ENCODE measurements at regions of chr1 and their contacts with region 1.

Region 1: DNA sequence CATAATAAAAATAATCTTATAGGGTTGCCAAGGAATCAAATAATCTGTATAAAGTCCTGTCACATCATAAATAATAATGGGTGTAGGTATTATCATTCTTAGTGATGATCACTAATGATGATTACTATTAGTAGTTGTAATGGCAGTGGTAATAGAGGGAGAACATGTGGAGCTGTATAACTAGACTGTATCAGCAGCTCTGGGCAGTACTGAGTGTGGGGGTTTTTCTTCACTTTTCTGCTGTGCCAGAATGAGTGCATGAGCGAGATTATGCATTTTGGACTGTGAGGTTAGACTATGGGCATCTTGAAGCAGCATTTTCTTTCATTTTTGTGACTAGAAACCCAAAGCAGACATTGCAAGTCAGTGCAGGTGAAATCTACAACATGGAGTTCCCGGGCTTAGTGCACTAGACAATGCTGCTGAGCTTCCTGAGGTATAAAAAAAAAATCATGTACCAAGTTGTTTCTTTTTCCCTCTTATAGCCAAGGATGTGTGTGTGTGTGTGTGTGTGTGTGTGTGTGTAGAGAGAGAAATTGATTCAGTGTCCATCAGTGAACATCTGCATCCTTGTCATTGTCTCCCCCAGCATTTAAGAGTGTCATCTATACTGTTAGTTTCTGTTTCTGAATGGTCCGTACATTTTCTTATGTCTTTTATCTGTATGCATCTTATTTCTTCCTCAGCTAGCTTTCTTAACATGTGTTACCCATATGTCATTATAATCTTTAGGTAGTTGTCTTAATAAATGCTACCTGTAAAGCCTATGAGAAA is 86.6 kb downstream of the GIPC2 start:
- DNase-seq: no peak
- H3K4me3 Mint-ChIP-seq: no peak overlapping the region
- H3K27ac Mint-ChIP-seq: no peak overlapping the region
- H3K4me1 Mint-ChIP-seq: no peaks in the 10 kb centered on the region
- H3K27me3 Mint-ChIP-seq: no peaks in the 10 kb centered on the region
- CTCF ChIP-seq: no peak

Region 2: GRCh38 chr1:77975386-77975785 is 157.0 kb before region 1 on chr1:
- CTCF ChIA-PET with region 1: no interaction called
- POLR2A ChIA-PET with region 1: no interaction called
- intact Hi-C with region 1: no loop called
- DNase-seq: peak; percentile 36
- H3K4me3 Mint-ChIP-seq: no peak overlapping the region
- H3K27ac Mint-ChIP-seq: no peak overlapping the region
- H3K4me1 Mint-ChIP-seq: peaks cover 23% of the 10 kb centered on the region
- H3K27me3 Mint-ChIP-seq: no peaks in the 10 kb centered on the region
- CTCF ChIP-seq: no peak

Region 3: DNA sequence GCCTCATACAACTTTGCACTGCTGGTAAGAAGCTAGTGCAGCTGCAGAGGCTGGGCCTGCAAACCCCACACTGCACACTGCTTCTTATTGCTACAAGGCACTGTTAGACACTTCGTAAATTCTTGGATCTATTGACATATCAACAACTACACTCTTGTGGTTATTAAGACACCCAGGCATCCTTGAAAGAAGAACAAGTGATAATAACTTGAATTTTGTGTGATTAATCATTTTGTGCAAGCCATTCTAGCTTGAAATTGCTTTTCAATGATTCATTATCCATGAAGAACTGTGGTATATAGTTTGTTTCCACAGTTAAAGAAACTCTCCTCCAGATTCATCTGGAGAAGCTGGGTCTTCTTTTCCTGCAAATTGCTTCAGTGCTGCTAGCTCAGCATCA is 454.2 kb after region 1 on chr1:
- CTCF ChIA-PET with region 1: interaction called, 10 read pairs
- POLR2A ChIA-PET with region 1: no interaction called
- intact Hi-C with region 1: no loop called
- DNase-seq: no peak
- H3K4me3 Mint-ChIP-seq: no peak overlapping the region
- H3K27ac Mint-ChIP-seq: no peak overlapping the region
- H3K4me1 Mint-ChIP-seq: peaks cover 14% of the 10 kb centered on the region
- H3K27me3 Mint-ChIP-seq: no peaks in the 10 kb centered on the region
- CTCF ChIP-seq: no peak

Region 4: DNA sequence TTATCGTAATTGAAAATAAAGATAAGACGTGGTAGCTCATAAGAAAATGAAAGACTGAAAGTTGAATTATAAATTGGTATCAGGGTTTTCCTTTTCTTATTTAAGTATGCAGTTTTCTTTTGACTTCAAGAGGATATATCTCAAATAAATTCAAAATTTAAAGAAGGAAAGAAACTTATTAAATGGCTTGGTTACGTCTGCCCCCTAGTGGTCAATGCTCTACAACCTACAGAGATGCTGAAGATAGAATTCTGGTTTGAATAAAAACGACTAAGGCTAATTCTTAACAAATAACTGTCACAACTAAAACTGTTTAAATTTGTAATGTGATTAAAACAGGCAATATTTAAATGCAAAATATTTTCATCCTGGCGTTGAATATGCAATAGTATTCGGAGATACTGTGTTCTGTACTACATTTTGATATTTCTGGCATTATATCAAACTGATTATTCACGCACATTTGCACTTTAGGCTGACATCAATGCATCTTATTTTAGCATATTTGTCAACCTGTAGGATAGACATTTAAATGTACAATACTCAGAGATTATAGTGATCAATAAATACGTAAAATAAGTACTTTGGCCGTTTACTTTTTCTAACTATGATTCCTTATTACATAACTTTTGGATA is 544.1 kb after region 1 on chr1:
- CTCF ChIA-PET with region 1: interaction called, 21 read pairs
- POLR2A ChIA-PET with region 1: no interaction called
- intact Hi-C with region 1: loop called (anchors 1 kb)
- DNase-seq: peak; percentile 76
- H3K4me3 Mint-ChIP-seq: no peak overlapping the region
- H3K27ac Mint-ChIP-seq: no peak overlapping the region
- H3K4me1 Mint-ChIP-seq: no peaks in the 10 kb centered on the region
- H3K27me3 Mint-ChIP-seq: no peaks in the 10 kb centered on the region
- CTCF ChIP-seq: peak; percentile 71